ENCODE measurements at regions of chr14 and their contacts with region 1.

Region 1: GRCh38 chr14:103078093-103078749 is 5.8 kb upstream of the LBHD2 start:
- DNase-seq: peak; percentile 79

Region 2: DNA sequence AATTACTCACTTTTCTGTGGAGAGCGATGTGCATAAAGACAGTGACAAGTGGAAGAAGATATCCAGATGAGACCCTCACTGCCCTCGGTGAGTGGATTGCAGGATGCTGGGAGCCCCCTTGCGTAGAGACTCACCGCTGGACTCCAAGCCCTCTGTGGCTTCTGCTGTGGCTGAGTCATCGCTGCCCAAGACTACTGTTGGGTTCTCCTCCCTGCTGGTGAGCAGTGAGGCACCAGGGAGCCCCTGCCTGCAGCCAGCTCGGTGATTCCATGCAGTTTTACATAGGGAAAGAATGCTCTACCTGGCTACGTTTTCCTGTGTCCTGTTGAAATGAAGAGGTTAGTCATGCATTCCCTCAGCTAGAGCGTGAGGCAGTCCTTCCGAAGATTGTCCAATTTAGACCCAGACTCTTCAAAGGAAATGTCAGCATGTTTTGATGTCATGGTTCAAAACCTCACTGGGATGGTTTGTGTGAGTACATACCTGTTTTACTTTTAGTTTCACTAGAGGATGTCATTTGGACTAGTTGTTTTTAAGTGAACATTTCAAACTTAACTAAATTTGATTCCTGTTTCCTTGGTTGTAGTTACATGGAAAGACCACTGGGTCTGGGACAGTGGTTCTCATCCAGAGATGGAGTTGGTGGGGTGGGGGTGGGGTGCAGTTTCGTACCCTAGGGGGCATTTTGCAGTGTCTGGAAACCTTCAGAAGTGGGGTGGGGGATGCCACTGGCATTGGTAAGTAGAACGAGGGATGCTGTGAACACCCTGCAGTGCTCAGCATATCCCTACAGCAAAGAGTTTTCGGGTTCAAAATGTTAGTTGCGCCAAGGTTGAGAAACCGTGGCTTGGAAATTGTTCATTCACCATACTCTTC is 272.6 kb before region 1 on chr14:
- in situ Hi-C with region 1: no loop called
- DNase-seq: peak; percentile 32

Region 3: DNA sequence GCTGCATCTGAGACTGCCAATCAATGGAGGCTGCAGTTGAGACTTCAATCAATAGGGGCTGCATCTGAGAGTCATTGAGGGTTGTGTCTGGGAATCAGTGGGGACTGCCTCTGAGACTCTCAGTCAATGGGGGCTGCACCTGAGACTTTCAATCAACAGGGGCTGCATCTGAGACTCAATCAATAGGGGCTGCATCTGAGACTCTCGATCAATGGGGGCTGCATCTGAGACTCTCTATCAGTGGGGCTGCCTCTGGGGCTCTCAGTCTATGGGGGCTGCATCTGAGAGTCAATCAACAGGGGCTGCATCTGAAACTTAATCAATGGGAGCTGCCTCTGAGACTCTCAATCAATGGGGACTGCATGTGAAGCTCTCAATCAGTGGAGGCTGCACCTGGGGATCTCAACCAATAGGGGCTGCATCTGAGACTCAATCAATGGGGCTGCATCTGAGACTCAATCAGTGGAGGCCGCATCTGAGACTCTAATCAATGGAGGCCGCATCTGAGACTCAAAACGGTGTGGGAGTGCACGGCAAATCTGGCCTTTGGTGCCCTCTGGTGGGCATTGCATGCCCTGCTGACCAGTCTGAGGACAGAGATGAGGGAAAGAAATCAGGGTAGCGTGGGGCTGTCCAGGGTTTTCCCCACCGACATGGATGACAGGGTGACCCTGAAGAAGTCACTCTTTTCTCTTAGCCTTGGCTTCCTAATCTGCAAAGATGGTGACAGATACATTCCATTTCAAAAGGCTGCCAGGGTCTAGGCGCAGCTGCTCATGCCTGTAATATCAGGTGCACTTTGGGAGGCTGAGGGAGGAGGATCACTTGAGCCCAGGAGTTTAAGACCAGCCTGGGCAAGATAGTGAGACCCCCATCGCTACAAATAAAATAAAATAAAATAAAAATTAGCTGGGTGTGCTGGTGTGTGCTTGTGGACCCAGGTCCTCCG is 214.5 kb after region 1 on chr14:
- in situ Hi-C with region 1: loop called (anchors 25 kb)
- DNase-seq: peak; percentile 72

Measured in KBM-7 (cell line).